Endothelial cell of umbilical vein (primary cell): ENCODE measurements at regions of chr12 and their contacts with region 1.

Region 1: GRCh38 chr12:22709292-22709691 is 84.3 kb downstream of the ETNK1 start:
- DNase-seq: peak; percentile 12
- H3K4me3 ChIP-seq: no peak overlapping the region
- H3K27ac ChIP-seq: no peak overlapping the region
- H3K4me1 ChIP-seq: no peaks in the 10 kb centered on the region
- H3K27me3 ChIP-seq: peaks cover 0 to 4% of the 10 kb centered on the region in 2 experiments
- CTCF ChIP-seq: peak; percentile 9 to 20
- POLR2A ChIP-seq: no peak

Region 2: GRCh38 chr12:22658214-22658613 is 51.1 kb before region 1 on chr12:
- CTCF ChIA-PET with region 1: no interaction called
- POLR2A ChIA-PET with region 1: no interaction called
- dilution Hi-C with region 1: no loop called
- intact Hi-C with region 1: no loop called
- DNase-seq: peak; percentile 64
- H3K4me3 ChIP-seq: no peak overlapping the region
- H3K27ac ChIP-seq: no peak overlapping the region
- H3K4me1 ChIP-seq: peaks cover 13% of the 10 kb centered on the region
- H3K27me3 ChIP-seq: no peaks in the 10 kb centered on the region
- CTCF ChIP-seq: no peak
- POLR2A ChIP-seq: no peak

Region 3: DNA sequence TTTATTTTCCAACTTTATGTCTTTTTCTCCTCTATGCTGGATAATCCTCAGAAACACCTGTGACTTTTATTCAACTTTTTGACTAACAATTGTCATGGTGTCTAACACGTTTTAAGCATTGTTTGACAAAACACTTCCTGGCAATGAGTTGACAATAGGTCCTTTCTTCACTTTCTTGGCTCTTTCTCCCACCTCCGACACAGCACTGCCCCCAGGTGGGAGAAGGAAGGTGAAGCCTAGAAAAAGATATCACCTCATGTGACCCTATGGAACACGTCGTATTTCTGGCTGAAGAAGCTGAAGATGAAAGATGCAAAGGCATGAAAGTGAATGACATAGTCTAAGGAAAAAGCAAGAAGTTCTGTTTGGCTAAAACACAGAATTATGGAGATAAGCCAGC is 345.7 kb after region 1 on chr12:
- CTCF ChIA-PET with region 1: no interaction called
- POLR2A ChIA-PET with region 1: no interaction called
- dilution Hi-C with region 1: no loop called
- intact Hi-C with region 1: loop called (anchors 5 kb)
- DNase-seq: peak; percentile 4
- H3K4me3 ChIP-seq: no peak overlapping the region
- H3K27ac ChIP-seq: no peak overlapping the region
- H3K4me1 ChIP-seq: no peaks in the 10 kb centered on the region
- H3K27me3 ChIP-seq: no peaks in the 10 kb centered on the region
- CTCF ChIP-seq: peak; percentile 11 to 22
- POLR2A ChIP-seq: no peak